ENCODE measurements at regions of chr17 and their contacts with region 1.

Region 1: GRCh38 chr17:74961657-74962490 is 10.7 kb downstream of the HID1 start:
- DNase-seq: peak; percentile 62 to 93 (median 85)
- ATAC-seq: peak; percentile 75
- H3K4me3 ChIP-seq: no peak overlapping the region
- H3K4me3 Mint-ChIP-seq: no peak overlapping the region
- H3K27ac ChIP-seq: no peak overlapping the region
- H3K27ac Mint-ChIP-seq: no peak overlapping the region
- H3K4me1 ChIP-seq: no peaks in the 10 kb centered on the region
- H3K4me1 Mint-ChIP-seq: peaks cover 9% of the 10 kb centered on the region
- H3K27me3 ChIP-seq: no peaks in the 10 kb centered on the region
- H3K27me3 Mint-ChIP-seq: no peaks in the 10 kb centered on the region
- CTCF ChIP-seq: peak; percentile 86

Region 2: DNA sequence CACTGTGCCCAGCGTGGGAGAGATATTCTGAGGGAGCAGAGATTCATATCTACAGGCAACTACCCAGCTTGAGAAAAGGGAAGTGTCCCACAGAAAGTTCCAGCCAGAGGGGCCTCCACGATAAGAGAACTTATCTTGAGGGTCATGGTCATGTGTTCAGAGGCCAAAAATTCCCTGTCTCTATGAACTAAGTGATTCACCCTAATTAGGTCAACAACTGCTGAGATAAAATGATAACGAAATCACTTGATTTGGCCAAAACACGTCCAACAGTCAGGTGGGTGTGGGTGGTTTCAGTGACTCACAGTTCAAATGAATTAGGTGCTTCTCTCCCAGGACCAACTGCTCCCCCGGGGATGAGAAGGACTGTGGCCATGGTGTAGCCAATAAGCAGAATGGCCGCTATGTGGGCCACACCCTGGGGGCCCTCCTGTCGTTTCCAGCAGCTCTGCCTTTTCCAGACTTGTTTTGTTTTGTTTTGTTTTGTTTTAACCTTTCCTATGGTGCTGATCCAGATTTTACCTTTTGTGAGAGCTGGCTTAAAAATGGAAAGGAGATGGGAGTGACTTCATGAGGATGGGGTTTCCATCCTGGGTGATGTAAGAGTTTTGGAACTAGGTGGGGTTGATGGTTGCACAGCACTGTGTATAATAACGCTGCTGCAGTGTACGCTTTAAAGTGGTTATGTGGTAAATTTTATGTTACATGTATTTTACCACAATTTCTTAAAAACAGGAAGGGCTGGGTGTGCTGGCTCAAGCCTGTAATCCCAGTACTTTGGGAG is 679.1 kb before region 1 on chr17:
- CTCF ChIA-PET with region 1: no interaction called
- POLR2A ChIA-PET with region 1: no interaction called
- intact Hi-C with region 1: no loop called
- DNase-seq: peak in 7 of 9 experiments; percentile 24 to 86 (median 59)
- ATAC-seq: peak; percentile 74
- H3K4me3 ChIP-seq: no peak overlapping the region
- H3K4me3 Mint-ChIP-seq: peak overlapping the region; percentile 52
- H3K27ac ChIP-seq: peak overlapping the region; percentile 53 to 82
- H3K27ac Mint-ChIP-seq: peak overlapping the region; percentile 98
- H3K4me1 ChIP-seq: peaks cover 54% of the 10 kb centered on the region
- H3K4me1 Mint-ChIP-seq: peaks cover 40% of the 10 kb centered on the region
- H3K27me3 ChIP-seq: no peaks in the 10 kb centered on the region
- H3K27me3 Mint-ChIP-seq: no peaks in the 10 kb centered on the region
- CTCF ChIP-seq: no peak

Region 3: GRCh38 chr17:74923533-74924249 is 38.2 kb before region 1 on chr17:
- CTCF ChIA-PET with region 1: interaction called, 32 read pairs
- POLR2A ChIA-PET with region 1: no interaction called
- intact Hi-C with region 1: loop called (anchors 1 kb)
- DNase-seq: peak; percentile 45 to 84 (median 73)
- ATAC-seq: peak; percentile 67
- H3K4me3 ChIP-seq: peak overlapping the region; percentile 29 to 41
- H3K4me3 Mint-ChIP-seq: peak overlapping the region; percentile 67
- H3K27ac ChIP-seq: no peak overlapping the region
- H3K27ac Mint-ChIP-seq: no peak overlapping the region
- H3K4me1 ChIP-seq: peaks cover 13% of the 10 kb centered on the region
- H3K4me1 Mint-ChIP-seq: peaks cover 8% of the 10 kb centered on the region
- H3K27me3 ChIP-seq: peaks cover 27% of the 10 kb centered on the region in 2 experiments
- H3K27me3 Mint-ChIP-seq: peaks cover 55% of the 10 kb centered on the region
- CTCF ChIP-seq: peak; percentile 86

Region 4: GRCh38 chr17:74981979-74982662 is 20.2 kb after region 1 on chr17:
- CTCF ChIA-PET with region 1: interaction called, 12 read pairs
- POLR2A ChIA-PET with region 1: interaction called, 3 read pairs
- intact Hi-C with region 1: no loop called
- DNase-seq: peak; percentile 57 to 92 (median 78)
- ATAC-seq: peak; percentile 89
- H3K4me3 ChIP-seq: peak overlapping the region; percentile 66
- H3K4me3 Mint-ChIP-seq: peak overlapping the region; percentile 87
- H3K27ac ChIP-seq: peak overlapping the region; percentile 74 to 76
- H3K27ac Mint-ChIP-seq: peak overlapping the region; percentile 86
- H3K4me1 ChIP-seq: peaks cover 21% of the 10 kb centered on the region
- H3K4me1 Mint-ChIP-seq: peaks cover 21% of the 10 kb centered on the region
- H3K27me3 ChIP-seq: no peaks in the 10 kb centered on the region
- H3K27me3 Mint-ChIP-seq: peaks cover 5% of the 10 kb centered on the region
- CTCF ChIP-seq: no peak

Region 5: DNA sequence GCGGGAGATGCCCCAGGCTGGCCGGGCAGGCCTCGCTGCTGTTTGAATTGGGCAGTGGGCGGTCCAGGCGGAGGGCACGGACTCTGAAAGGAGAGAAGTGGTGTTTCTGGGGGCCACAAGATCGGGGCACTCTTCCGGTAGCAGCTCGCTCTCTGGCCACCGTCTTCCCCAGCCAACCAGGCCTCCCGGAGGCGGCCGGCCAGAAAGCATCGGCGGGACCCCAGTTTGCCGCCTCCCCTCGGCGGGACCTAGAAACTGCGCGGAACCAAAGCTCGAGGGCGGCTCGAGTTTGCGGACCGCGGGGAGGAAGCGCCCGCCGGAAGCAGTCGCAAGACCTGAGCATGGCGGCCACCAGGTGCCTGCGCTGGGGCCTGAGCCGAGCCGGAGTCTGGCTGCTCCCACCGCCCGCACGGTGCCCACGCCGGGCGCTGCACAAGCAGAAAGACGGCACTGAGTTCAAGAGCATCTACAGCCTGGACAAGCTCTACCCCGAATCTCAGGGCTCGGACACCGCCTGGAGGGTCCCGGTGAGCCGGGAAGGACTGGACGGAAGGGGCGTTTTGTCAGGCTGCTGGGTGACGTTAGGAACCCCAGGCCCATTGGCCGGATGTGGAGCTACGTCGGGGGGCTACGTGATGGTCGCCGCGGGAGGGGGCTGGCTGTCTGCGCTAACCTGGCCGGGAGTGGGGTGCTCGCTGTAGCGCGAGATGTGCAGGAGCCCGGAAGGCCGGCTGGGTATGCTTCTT is 50.6 kb after region 1 on chr17 and contains the start of gene MRPL58:
- CTCF ChIA-PET with region 1: interaction called, 58 read pairs
- POLR2A ChIA-PET with region 1: interaction called, 18 read pairs
- intact Hi-C with region 1: loop called (anchors 1 kb)
- DNase-seq: peak; percentile 59 to 90 (median 79)
- ATAC-seq: peak; percentile 92
- H3K4me3 ChIP-seq: peak within 1 kb of the TSS; percentile 82 to 85
- H3K4me3 Mint-ChIP-seq: peak within 1 kb of the TSS; percentile 93
- H3K27ac ChIP-seq: peak within 1 kb of the TSS; percentile 77 to 79
- H3K27ac Mint-ChIP-seq: peak within 1 kb of the TSS; percentile 94
- H3K4me1 ChIP-seq: peaks cover 15% of the 10 kb centered on the region
- H3K4me1 Mint-ChIP-seq: peaks cover 33% of the 10 kb centered on the region
- H3K27me3 ChIP-seq: no peaks in the 10 kb centered on the region
- H3K27me3 Mint-ChIP-seq: no peaks in the 10 kb centered on the region
- CTCF ChIP-seq: peak; percentile 59
- total RNA-seq, gene MRPL58: 9.2 to 11.2 TPM

Region 6: DNA sequence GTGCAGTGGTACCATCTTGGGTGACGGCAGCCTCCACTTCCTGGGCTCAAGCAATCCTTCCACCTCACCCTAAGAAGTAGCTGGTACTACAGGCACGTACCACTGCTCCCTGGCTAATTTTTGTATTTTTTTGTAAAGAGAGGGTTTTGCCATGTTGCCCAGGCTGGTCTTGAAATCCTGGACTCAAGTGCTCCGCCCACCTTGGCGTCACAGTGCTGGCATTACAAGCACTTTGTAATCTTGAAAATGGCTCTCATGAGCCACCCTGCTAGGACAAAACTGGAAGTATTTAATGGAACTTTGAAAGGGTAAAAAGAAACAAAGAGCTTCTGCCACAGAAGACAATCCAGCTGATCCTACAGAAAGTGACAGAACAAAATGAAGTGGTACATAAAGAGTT is 211.7 kb after region 1 on chr17:
- CTCF ChIA-PET with region 1: interaction called, 37 read pairs
- POLR2A ChIA-PET with region 1: interaction called, 4 read pairs
- intact Hi-C with region 1: loop called (anchors 1 to 2 kb)
- DNase-seq: no peak
- ATAC-seq: no peak
- H3K4me3 ChIP-seq: no peak overlapping the region
- H3K4me3 Mint-ChIP-seq: no peak overlapping the region
- H3K27ac ChIP-seq: no peak overlapping the region
- H3K27ac Mint-ChIP-seq: no peak overlapping the region
- H3K4me1 ChIP-seq: peaks cover 9% of the 10 kb centered on the region
- H3K4me1 Mint-ChIP-seq: peaks cover 19% of the 10 kb centered on the region
- H3K27me3 ChIP-seq: no peaks in the 10 kb centered on the region
- H3K27me3 Mint-ChIP-seq: no peaks in the 10 kb centered on the region
- CTCF ChIP-seq: no peak

Region 7: GRCh38 chr17:75412455-75413317 is 450.8 kb after region 1 on chr17:
- CTCF ChIA-PET with region 1: interaction called, 3 read pairs
- POLR2A ChIA-PET with region 1: no interaction called
- intact Hi-C with region 1: loop called in 1 of 2 experiments (anchors 2 kb)
- DNase-seq: peak; percentile 49 to 88 (median 73)
- ATAC-seq: peak; percentile 90
- H3K4me3 ChIP-seq: peak overlapping the region in 1 of 2 experiments; percentile 22
- H3K4me3 Mint-ChIP-seq: peak overlapping the region; percentile 72
- H3K27ac ChIP-seq: no peak overlapping the region
- H3K27ac Mint-ChIP-seq: peak overlapping the region; percentile 62
- H3K4me1 ChIP-seq: peaks cover 8% of the 10 kb centered on the region
- H3K4me1 Mint-ChIP-seq: peaks cover 16% of the 10 kb centered on the region
- H3K27me3 ChIP-seq: no peaks in the 10 kb centered on the region
- H3K27me3 Mint-ChIP-seq: no peaks in the 10 kb centered on the region
- CTCF ChIP-seq: peak; percentile 70

Measured in CD8-positive, alpha-beta T cell (primary cell).